ENCODE measurements at regions of chr3 and their contacts with region 1.

Region 1: GRCh38 chr3:195894780-195895607 is 13.4 kb downstream of the TNK2 start:
- DNase-seq: peak; percentile 72

Region 2: DNA sequence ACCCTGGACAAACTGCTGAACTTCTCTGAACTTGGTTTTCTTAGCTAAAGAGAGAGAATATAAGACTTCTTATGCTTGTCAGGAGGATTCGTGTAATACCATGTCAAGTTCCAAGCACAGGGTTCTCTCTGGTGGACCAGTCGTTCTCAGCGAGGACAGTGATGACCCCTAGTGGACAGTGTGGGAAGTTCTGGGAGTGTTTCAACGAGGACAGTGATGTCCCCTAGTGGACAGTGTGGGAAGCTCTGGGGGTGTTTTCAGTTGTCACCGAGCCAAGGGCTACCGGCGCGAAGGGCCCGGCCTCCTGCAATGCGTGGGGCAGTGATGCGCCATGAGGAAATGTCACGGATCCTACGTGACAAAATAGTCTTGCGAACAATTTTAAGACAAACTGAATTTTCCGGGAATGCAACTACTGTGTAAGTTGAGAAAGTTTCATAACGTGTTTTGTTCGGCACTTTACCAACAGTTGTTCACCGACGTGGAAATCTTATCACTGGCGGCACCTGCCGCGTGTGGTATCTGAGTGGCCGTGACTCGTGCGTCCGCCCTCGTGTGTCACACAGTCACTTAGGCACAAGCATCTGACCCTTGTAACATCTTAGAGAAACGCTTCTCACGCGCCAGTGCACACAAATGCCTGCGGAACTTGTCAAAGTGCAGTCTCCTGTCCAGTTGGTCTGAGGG is 44.0 kb before region 1 on chr3:
- CTCF ChIA-PET with region 1: interaction called, 10 read pairs
- POLR2A ChIA-PET with region 1: no interaction called
- DNase-seq: peak; percentile 81

Region 3: GRCh38 chr3:195859061-195859845 is 35.7 kb before region 1 on chr3:
- CTCF ChIA-PET with region 1: interaction called, 12 read pairs
- POLR2A ChIA-PET with region 1: interaction called, 3 read pairs
- DNase-seq: peak; percentile 65

Region 4: DNA sequence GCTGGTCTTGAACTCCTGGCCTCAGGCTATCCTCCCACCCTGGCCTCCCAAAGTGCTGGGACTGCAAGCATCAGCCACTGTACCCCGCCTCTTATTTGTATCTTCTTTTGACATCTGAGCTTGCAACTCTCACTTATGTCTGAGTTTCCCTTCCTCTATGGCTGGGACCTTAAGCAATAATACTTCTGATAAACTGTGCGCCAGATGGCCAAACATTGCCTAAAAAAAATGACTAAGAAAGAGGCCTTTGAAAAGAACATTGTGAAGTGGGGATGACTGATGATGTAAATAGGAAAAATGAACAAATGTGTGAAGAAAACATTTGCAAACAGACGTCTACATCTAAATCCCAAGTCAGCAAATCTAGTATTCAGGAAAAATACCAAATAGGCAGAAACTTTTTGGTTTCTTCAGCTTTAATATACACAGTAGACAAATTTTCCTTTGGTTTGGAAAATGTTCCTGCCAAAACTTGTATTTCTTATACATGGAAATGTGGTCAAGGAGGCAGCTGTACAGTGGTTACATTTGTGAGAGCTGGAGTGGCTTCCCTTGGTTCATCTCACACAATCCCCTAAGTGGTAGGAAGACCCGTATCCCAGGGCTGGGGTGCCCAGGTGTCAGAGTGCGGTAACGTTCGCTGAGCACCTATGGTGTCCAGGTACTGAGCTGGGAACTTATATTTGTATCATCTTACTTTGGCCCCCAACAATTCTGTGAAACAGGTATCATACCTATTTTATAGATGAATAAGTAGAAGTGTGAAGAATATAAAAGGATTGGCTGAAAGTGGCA is 198.5 kb after region 1 on chr3:
- CTCF ChIA-PET with region 1: no interaction called
- POLR2A ChIA-PET with region 1: no interaction called
- DNase-seq: no peak

Measured in HEK293T (cell line).